ENCODE measurements at regions of chr6 and their contacts with region 1.

Region 1: GRCh38 chr6:133973109-133973971 is 20.3 kb downstream of the TBPL1 start:
- DNase-seq: peak; percentile 31
- H3K4me3 ChIP-seq: no peak overlapping the region
- H3K27ac ChIP-seq: no peak overlapping the region
- H3K4me1 ChIP-seq: peaks cover 7% of the 10 kb centered on the region
- H3K27me3 ChIP-seq: no peaks in the 10 kb centered on the region
- CTCF ChIP-seq: peak; percentile 69 to 70

Region 2: DNA sequence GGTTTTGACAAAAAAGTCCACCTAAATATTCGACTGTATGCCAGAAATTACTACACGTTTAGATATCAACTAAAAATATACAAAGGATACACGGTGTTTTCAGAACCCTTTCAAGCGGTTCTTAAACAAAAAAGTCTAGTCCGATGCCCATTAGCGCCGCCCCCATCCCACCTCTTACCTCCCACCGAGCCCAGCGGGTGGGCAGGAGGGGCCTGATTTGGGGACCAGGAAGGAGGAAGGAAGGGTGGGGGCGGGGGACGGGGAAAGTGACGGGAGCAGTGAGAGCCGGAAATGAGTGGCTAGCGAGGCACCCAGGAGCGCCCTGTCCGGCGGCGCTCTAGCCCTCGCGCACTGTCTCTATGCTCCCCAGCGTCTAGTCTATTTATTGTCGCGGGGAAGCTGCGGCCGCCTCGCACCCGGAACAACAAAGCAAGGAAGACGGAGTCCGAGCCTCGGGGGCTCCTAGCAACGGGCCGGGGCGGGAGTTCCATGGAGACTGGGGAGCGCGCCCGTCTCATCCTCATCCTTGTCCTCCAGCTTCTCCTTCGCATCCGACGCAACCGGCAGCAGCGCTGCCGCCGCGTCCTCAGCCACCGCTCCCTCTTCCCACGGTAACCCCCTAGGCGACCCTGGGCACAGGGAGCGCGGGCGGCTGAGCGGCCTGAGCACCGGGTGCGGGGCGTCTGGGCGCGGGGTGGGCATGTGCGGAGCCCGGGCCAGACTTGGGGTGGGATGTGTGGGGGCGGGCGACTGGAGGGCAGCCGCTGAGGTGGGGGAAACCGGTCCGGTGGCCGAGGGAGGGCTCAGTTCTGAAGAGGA is 20.3 kb before region 1 on chr6 and contains the start of gene TBPL1:
- CTCF ChIA-PET with region 1: no interaction called
- dilution Hi-C with region 1: no loop called
- in situ Hi-C with region 1: no loop called
- intact Hi-C with region 1: loop called (anchors 2 kb)
- DNase-seq: peak; percentile 88
- H3K4me3 ChIP-seq: peak within 1 kb of the TSS; percentile 57 to 96 (median 88)
- H3K27ac ChIP-seq: peak within 1 kb of the TSS; percentile 66
- H3K4me1 ChIP-seq: peaks cover 17% of the 10 kb centered on the region
- H3K27me3 ChIP-seq: no peaks in the 10 kb centered on the region
- CTCF ChIP-seq: no peak
- total RNA-seq, gene TBPL1: 19.2 to 25.6 TPM

Region 3: DNA sequence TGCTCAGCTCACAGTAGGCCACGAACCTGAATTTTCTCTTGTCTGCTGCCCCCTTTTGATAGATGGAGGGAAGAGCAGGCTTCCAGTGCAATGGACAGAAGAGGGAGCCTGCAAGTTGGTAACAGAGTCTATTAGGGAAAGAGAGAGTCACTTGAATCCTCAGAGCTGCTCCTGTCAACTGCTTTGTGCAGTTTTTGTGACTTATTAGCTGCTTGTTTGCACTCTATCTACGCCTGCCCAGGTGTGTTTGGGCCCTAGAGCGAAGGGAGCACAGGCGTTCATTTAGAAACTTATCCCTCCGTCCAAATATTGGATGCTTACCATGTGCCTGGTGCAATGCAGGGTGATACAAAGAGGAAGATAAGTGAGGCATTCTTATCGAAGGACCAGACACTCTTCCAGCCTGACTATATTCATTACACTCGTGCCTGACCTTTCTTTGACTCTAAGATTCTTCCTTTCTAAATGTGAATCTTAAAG is 90.7 kb after region 1 on chr6:
- CTCF ChIA-PET with region 1: interaction called, 11 read pairs
- dilution Hi-C with region 1: no loop called
- in situ Hi-C with region 1: loop called (anchors 5 kb)
- intact Hi-C with region 1: loop called (anchors 1 kb)
- DNase-seq: peak; percentile 55
- H3K4me3 ChIP-seq: no peak overlapping the region
- H3K27ac ChIP-seq: no peak overlapping the region
- H3K4me1 ChIP-seq: peaks cover 20% of the 10 kb centered on the region
- H3K27me3 ChIP-seq: no peaks in the 10 kb centered on the region
- CTCF ChIP-seq: peak; percentile 93 to 98

Measured in mammary epithelial cell (primary cell).